ENCODE measurements at regions of chr6 and their contacts with region 1.

Region 1: DNA sequence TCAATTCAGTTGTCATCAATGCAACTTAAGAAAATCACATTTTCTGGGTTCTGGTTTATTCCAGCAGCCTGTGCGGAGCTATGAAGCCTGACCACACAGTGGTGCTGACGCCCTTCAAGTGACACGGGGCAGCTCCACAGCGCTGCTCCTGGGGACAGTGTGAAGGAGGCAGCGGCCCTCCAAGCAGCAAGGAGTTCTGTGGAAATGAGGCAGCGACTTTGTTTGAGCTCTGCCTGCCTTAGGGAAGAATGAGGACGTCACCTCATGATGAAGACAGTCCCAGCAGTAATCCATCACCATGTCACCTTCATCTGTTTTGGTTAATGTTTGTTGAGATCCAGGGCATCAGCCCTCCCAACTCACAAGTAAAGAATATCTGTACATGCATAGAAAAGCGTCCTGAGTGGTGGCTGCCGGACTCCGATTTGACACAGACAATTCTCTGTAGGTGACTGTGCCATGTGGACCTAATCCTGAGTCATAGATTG is 168.5 kb upstream of the UST start:
- DNase-seq: peak; percentile 63 to 72
- ATAC-seq: peak; percentile 94 to 99
- H3K4me3 ChIP-seq: no peak overlapping the region
- H3K27ac ChIP-seq: no peak overlapping the region
- H3K4me1 ChIP-seq: no peaks in the 10 kb centered on the region
- H3K27me3 ChIP-seq: no peaks in the 10 kb centered on the region
- CTCF ChIP-seq: peak; percentile 54 to 90 (median 81)
- POLR2A ChIP-seq: no peak

Region 2: GRCh38 chr6:148611234-148611633 is 32.9 kb after region 1 on chr6:
- in situ Hi-C with region 1: no loop called
- intact Hi-C with region 1: loop called (anchors 2 kb)
- DNase-seq: peak; percentile 88 to 90
- ATAC-seq: peak; percentile 99 to 100
- H3K4me3 ChIP-seq: peak overlapping the region in 2 of 4 donors; percentile 15
- H3K27ac ChIP-seq: peak overlapping the region; percentile 80 to 91 (median 84)
- H3K4me1 ChIP-seq: peaks cover 29 to 41% of the 10 kb centered on the region in 2 donors
- H3K27me3 ChIP-seq: no peaks in the 10 kb centered on the region
- CTCF ChIP-seq: no peak
- POLR2A ChIP-seq: no peak

Region 3: DNA sequence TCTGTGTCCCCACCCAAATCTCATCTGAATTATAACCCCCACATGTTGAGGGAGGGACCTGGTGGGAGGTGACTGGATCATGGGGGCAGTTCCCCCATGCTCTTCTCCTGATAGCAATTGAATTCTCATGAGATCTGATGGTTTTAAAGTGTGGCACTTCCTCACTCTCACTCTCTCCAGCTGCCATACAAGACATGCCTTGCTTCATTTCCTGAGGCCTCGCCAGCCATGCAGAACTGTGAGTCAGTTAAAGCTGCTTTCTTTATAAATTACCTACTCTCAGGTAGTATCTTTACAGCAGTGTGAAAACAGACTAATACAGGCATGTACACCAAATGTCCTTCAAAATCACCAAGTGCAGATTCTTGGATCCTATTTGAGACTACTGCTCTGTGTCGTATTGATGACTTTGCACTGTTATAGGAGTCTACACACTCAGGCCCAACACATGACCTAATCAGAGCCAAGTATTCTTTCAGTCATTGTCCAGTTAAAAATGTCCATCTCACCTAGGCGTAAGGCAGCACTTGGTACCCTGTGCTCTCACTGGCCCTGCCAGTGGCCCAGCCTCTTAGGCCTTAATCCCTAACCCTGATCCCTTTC is 115.7 kb after region 1 on chr6:
- in situ Hi-C with region 1: loop called in 1 of 4 experiments (anchors 10 kb)
- intact Hi-C with region 1: no loop called
- DNase-seq: no peak
- ATAC-seq: no peak
- H3K4me3 ChIP-seq: no peak overlapping the region
- H3K27ac ChIP-seq: no peak overlapping the region
- H3K4me1 ChIP-seq: no peaks in the 10 kb centered on the region
- H3K27me3 ChIP-seq: no peaks in the 10 kb centered on the region
- CTCF ChIP-seq: no peak
- POLR2A ChIP-seq: no peak

Region 4: DNA sequence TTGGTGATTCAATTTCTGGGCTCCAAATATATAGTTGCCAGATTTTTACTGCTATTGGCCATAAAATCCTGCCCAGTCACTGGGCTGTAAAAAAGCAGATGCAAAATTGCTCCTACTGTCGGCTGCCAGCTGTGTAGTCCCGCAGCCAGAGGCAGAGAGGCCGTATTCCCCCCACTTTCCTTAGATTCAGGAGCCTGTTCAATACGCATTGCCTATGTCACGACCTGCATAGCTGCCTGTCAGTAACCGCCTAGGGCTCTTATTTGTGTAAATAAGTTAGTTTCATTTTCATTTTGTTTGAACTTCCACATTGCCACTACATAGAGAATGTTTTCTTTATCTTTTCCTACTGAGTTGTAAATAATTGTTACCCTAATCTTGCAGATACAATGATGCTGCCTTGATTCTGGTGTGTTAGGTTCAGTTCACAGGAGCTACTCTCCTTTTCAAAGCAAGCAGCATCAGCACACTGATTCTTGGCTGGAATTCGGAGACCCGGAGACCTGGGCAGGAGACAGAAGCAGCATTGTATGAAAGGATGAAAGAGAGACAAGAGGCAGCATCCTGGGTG is 122.5 kb after region 1 on chr6:
- in situ Hi-C with region 1: loop called in 2 of 4 experiments (anchors 10 kb)
- intact Hi-C with region 1: loop called (anchors 2 kb)
- DNase-seq: no peak
- ATAC-seq: peak in 1 of 2 donors; percentile 41
- H3K4me3 ChIP-seq: peak overlapping the region; percentile 27 to 66 (median 39)
- H3K27ac ChIP-seq: peak overlapping the region in 1 of 4 donors; percentile 10
- H3K4me1 ChIP-seq: peaks cover 5 to 12% of the 10 kb centered on the region in 2 donors
- H3K27me3 ChIP-seq: no peaks in the 10 kb centered on the region
- CTCF ChIP-seq: no peak
- POLR2A ChIP-seq: no peak

Region 5: DNA sequence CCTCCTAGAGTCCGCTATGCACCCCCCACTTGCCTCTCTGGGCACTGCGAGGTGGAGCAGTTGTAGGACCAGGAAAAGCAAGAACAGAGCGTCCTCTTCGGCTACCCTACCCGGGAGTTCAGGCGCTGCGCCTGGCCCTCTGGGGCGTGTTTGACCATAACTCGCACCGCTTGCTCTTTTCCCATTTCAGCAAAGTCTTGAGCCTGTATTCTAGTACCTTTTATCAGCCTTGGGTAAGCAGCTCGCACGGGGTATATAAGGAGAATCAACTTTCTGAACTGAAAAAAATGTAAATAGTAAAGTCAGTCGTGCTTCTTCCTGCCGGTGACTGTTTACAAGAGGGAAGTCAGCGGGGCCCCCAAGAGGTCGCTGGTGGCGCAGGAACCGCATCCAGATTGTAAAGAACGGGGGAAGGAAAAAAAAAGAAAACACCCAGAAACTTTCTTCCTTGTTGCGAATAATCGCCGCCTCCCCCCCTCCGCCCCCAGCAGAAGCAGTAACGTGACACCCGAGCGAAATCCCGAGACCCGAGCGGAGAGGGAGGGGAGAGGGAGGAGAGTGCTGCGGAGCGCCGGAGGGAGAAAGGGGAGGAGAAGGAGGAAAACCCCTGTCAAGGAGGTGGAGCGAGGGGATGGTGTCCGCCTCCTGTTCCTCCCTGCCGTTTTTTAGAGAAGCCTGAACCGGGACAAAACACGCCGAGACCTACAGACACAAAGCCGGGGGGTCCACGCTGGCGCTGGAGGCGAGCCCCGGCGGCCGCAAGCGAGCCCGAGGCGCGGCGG is 168.3 kb after region 1 on chr6 and contains the start of gene UST:
- in situ Hi-C with region 1: no loop called
- intact Hi-C with region 1: loop called (anchors 5 kb)
- DNase-seq: peak; percentile 77 to 78
- ATAC-seq: peak; percentile 75 to 84
- H3K4me3 ChIP-seq: peak within 1 kb of the TSS; percentile 68 to 80 (median 71)
- H3K27ac ChIP-seq: peak within 1 kb of the TSS; percentile 68 to 79 (median 72)
- H3K4me1 ChIP-seq: peaks cover 0 to 16% of the 10 kb centered on the region in 2 donors
- H3K27me3 ChIP-seq: peaks cover 4 to 6% (median 5%) of the 10 kb centered on the region in 3 donors
- CTCF ChIP-seq: no peak
- POLR2A ChIP-seq: peak; percentile 20 to 70
- total RNA-seq, gene UST: 2.3 to 8.4 (median 2.8) TPM

Region 6: GRCh38 chr6:148947621-148948444 is 369.5 kb after region 1 on chr6:
- in situ Hi-C with region 1: loop called (anchors 5 to 10 kb)
- intact Hi-C with region 1: loop called (anchors 1 kb)
- DNase-seq: peak; percentile 36 to 66
- ATAC-seq: peak; percentile 83
- H3K4me3 ChIP-seq: no peak overlapping the region
- H3K27ac ChIP-seq: no peak overlapping the region
- H3K4me1 ChIP-seq: no peaks in the 10 kb centered on the region
- H3K27me3 ChIP-seq: no peaks in the 10 kb centered on the region
- CTCF ChIP-seq: peak; percentile 57 to 88 (median 79)
- POLR2A ChIP-seq: no peak

Region 7: DNA sequence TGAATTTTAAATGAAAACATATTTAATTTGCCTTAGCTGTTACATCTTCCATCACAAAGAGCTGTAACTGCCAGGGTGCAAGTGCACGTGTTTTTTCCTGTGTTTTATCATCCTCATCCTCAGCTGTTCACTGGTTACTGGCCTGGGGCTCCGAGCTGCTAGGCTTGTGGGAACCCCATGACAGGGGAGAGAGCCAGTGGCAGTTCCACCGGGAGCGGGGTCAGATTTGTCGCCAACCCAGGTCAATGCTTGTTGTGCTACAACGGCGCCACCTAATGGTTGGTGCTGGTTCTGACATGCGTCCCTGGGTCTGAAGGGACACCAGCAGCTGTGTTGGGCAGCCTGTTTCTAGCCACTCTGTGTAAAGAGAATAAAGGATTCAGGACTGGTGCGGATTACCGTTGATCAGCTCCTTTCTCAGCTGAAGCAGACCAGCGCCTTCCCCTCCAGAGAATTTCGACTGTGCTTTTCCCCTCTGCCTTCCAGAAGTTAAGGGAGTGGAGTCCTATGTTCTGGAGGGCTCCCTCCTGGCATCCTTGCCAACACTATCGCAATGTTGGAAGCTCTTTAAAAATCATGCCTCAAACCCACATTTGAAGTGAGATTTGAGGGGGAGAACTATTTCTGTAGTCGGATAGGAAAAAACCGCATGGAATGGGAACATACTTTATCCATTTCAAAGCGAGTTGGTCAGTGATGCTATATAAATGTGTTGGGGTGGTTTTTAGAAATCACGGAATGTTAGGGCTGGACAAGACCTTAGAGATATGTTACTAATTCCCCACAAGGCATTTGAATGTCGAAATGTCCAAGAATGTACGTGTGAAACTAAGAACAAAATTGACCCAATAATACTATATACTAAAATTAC is 853.9 kb after region 1 on chr6:
- in situ Hi-C with region 1: loop called in 1 of 4 experiments (anchors 10 kb)
- intact Hi-C with region 1: no loop called
- DNase-seq: peak; percentile 76 to 83
- ATAC-seq: peak; percentile 87 to 91
- H3K4me3 ChIP-seq: no peak overlapping the region
- H3K27ac ChIP-seq: no peak overlapping the region
- H3K4me1 ChIP-seq: peaks cover 0 to 2% of the 10 kb centered on the region in 2 donors
- H3K27me3 ChIP-seq: no peaks in the 10 kb centered on the region
- CTCF ChIP-seq: peak; percentile 92 to 97 (median 95)
- POLR2A ChIP-seq: no peak